ENCODE measurements at regions of chr4 and their contacts with region 1.

Region 1: GRCh38 chr4:83197555-83198235 is 83.2 kb upstream of the PLAC8 start:
- DNase-seq: no peak
- ATAC-seq: peak; percentile 76
- H3K4me3 ChIP-seq: no peak overlapping the region
- H3K4me3 Mint-ChIP-seq: no peak overlapping the region
- H3K27ac ChIP-seq: no peak overlapping the region
- H3K27ac Mint-ChIP-seq: peak overlapping the region in 1 of 9 donors; percentile 11
- H3K4me1 ChIP-seq: no peaks in the 10 kb centered on the region
- H3K4me1 Mint-ChIP-seq: peaks cover 5 to 12% (median 7%) of the 10 kb centered on the region in 7 donors
- H3K27me3 ChIP-seq: no peaks in the 10 kb centered on the region
- H3K27me3 Mint-ChIP-seq: no peaks in the 10 kb centered on the region

Region 2: GRCh38 chr4:82905205-82905604 is 292.5 kb before region 1 on chr4:
- CTCF ChIA-PET with region 1: no interaction called
- POLR2A ChIA-PET with region 1: no interaction called
- intact Hi-C with region 1: no loop called
- DNase-seq: no peak
- ATAC-seq: no peak
- H3K4me3 ChIP-seq: no peak overlapping the region
- H3K4me3 Mint-ChIP-seq: peak overlapping the region in 1 of 10 donors; percentile 57
- H3K27ac ChIP-seq: no peak overlapping the region
- H3K27ac Mint-ChIP-seq: no peak overlapping the region
- H3K4me1 ChIP-seq: peaks cover 0 to 4% of the 10 kb centered on the region in 2 donors
- H3K4me1 Mint-ChIP-seq: peaks cover 0 to 29% (median 6%) of the 10 kb centered on the region in 7 donors
- H3K27me3 ChIP-seq: no peaks in the 10 kb centered on the region
- H3K27me3 Mint-ChIP-seq: peaks cover 0 to 7% (median 0%) of the 10 kb centered on the region in 5 donors

Region 3: DNA sequence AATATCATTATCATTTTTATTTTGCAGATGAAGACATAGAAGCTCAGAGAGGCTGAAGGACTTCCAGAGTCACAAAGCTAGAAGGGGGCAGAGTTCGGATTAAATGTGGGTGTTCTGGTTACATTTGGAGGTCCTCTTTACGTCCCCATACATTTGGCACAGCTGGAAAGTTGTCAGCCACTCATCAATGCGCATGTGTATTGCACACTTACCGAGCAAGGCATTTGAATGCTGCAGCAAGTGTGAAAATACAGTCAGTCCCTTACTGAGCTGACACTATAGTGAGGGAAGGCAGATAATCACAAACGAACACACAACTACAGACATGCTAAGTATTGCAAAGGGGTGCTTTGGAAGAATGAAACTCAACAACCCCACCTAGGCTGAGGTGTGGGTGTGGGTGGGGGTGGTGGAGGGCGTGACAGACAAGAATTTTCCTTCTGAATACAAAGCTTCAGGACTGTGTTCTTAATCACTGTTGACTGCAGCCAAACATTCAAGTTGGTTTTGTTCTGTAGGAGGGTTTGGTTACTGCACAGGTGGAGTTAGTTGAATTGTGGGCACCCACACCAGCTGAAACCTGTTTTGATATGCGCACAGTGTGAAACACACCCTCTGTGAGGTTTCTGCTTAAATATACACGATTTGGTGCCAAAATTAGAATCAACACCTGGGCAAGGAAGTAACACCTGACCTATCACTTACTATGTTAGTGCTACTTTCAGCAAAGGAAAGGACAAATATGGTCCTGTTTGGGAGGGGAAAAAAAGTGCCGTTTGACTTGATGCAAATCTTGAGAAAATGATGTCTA is 14.6 kb after region 1 on chr4:
- CTCF ChIA-PET with region 1: interaction called, 7 read pairs
- POLR2A ChIA-PET with region 1: interaction called, 6 read pairs
- intact Hi-C with region 1: loop called in 1 of 2 experiments (anchors 2 kb)
- DNase-seq: peak in 7 of 9 donors; percentile 72 to 96 (median 90)
- ATAC-seq: peak; percentile 95
- H3K4me3 ChIP-seq: peak overlapping the region; percentile 38
- H3K4me3 Mint-ChIP-seq: peak overlapping the region; percentile 49 to 90 (median 68)
- H3K27ac ChIP-seq: peak overlapping the region; percentile 67
- H3K27ac Mint-ChIP-seq: peak overlapping the region; percentile 83 to 99 (median 92)
- H3K4me1 ChIP-seq: peaks cover 67 to 69% of the 10 kb centered on the region in 2 donors
- H3K4me1 Mint-ChIP-seq: peaks cover 55 to 84% (median 79%) of the 10 kb centered on the region in 7 donors
- H3K27me3 ChIP-seq: no peaks in the 10 kb centered on the region
- H3K27me3 Mint-ChIP-seq: peaks cover 0 to 17% (median 0%) of the 10 kb centered on the region in 5 donors

Measured in naive thymus-derived CD4-positive, alpha-beta T cell (primary cell).